ENCODE measurements at regions of chr19 and their contacts with region 1.

Region 1: DNA sequence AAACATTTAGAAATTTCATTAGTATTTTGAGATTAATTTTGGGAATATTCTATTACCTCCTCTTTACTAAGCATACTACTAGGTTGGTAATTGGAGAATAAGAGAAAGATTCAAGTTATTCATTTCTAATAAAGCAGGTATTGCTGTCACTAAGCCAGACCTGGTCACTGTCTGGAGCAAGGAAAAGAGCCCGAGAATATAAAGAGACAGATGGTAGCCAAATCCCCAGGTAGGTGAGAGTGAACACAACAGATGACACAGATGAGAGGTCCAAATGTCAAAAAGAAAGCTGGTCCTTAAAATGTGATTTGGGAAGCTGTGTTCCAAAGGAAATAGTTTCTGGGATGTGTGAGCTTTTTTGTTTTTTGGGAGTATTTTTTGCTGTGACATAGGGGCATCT is 128.6 kb downstream of the ZNF100 start:
- DNase-seq: no peak
- H3K4me3 ChIP-seq: no peak overlapping the region
- CTCF ChIP-seq: no peak
- POLR2A ChIP-seq: no peak

Region 2: DNA sequence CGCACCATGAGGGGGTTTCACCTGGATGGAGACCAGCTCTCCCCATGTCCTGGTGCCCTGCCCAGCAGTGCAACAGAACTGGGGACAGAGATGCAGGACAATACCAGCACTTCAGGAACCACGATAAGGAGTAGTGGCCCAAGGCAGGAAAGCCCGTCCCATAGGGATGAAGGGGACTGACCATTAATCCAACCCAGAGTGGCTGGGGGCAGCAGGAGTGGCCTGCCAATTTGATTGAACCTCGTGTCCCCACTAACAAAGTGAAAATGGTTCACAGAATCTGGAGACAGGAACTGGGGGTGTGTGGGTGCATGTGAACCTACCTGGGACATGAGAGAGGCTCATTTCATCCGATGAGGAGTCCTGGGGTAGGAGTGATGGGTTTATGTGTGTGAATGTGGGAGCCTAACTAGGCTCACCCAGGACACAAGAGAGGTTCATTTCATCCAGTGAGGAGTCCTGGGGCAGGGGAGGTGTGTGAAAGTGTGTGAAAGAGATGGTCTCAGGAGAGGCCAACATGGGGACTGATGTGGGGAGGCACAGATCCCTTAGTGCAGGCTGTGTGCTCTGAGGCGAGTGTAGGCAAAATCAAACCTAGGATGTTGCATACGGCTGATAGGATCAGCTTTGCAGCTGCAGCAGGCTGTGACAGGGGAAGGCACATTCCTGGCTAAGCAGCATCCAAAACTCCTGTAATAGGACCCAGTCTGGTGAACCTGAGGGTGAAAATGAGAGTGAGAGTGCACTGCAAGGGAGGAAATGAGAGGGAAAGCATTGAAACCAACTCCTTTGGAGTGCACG is 35.1 kb before region 1 on chr19:
- intact Hi-C with region 1: loop called (anchors 2 kb)
- DNase-seq: no peak
- H3K4me3 ChIP-seq: no peak overlapping the region
- CTCF ChIP-seq: no peak
- POLR2A ChIP-seq: no peak

Region 3: GRCh38 chr19:21856773-21857514 is 218.2 kb after region 1 on chr19:
- intact Hi-C with region 1: no loop called
- DNase-seq: no peak
- H3K4me3 ChIP-seq: no peak overlapping the region
- CTCF ChIP-seq: no peak
- POLR2A ChIP-seq: no peak

Measured in lower leg skin (tissue), 4 donors.